HAP-1 (cell line): ENCODE measurements at regions of chr4 and their contacts with region 1.

Region 1: DNA sequence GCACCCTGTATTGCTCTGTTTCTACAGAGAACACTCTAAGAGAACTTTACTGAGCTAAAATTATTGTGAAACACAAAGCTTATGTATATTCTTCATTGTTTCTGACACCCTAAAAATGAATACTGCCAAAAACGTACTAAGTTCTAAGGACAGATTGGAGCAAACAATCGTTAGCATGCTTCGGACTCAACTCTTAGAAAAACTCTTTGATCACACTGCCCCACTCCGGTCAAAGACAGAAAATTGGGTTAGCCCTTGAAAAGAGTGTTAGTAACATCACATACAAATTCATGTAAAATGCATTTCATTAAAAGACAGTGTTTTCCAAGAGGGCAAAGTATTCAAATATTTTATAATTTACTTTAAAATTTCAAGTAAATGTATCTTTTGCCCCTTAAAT is 177.4 kb downstream of the DCHS2 start:
- DNase-seq: peak in 1 of 2 experiments; percentile 22
- H3K4me3 ChIP-seq: no peak overlapping the region
- H3K4me1 ChIP-seq: no peaks in the 10 kb centered on the region
- H3K27me3 ChIP-seq: no peaks in the 10 kb centered on the region

Region 2: GRCh38 chr4:153791746-153792617 is 522.3 kb before region 1 on chr4:
- in situ Hi-C with region 1: loop called (anchors 25 kb)
- DNase-seq: no peak
- H3K4me3 ChIP-seq: no peak overlapping the region
- H3K4me1 ChIP-seq: peaks cover 5% of the 10 kb centered on the region
- H3K27me3 ChIP-seq: peaks cover 7% of the 10 kb centered on the region